ENCODE measurements at regions of chr14 and their contacts with region 1.

Region 1: DNA sequence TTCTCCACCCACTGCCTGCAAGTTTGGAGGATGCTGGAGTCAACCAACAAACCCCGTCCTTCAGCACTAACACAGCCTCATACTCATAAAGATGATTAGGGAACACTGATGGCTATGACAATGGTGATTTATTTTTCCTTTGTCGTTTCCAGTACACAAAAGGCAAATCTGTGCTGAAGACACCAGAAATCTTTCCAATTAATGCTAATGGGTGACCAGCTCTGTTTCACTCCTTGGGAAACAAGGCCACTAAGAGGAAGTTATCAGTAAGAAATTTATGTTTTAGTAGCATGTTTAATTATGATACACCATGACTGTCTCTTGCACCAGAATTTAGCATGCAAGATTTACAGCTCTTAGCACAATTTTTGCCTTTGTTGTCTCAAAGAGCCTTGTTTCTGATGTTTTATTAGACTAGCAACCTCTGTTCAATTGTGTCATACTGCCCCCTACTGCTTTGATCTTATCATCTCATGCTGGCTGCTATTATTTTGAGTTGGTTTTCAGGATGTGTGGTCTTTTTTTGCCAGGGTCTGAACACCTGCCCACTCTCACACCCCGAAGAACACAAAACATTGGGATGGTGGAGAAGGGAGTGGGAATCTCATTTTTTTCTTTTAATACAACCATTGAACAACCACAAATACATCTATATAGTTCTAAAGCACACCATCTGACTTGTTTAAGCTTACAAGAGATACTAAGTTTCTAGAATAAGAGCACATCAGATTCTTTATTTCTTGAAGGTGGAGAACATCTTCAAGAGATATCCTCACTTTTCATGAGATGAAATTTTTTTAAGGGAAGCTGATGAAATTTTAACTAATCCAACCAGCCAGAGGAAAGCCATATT is 160.9 kb downstream of the SPTSSA start:
- DNase-seq: peak in 1 of 10 donors; percentile 35
- H3K4me3 ChIP-seq: no peak overlapping the region
- H3K27ac ChIP-seq: peak overlapping the region in 27 of 59 donors; percentile 2 to 74 (median 48)
- H3K27me3 ChIP-seq: no peaks in the 10 kb centered on the region
- CTCF ChIP-seq: peak; percentile 56 to 87 (median 76)

Region 2: GRCh38 chr14:32576088-32576795 is 1724.9 kb before region 1 on chr14:
- intact Hi-C with region 1: loop called in 1 of 2 experiments (anchors 10 kb)
- DNase-seq: peak in 9 of 10 donors; percentile 31 to 72 (median 52)
- H3K4me3 ChIP-seq: peak overlapping the region in 36 of 59 donors; percentile 3 to 56 (median 32)
- H3K27ac ChIP-seq: peak overlapping the region in 48 of 59 donors; percentile 1 to 84 (median 60)
- H3K27me3 ChIP-seq: no peaks in the 10 kb centered on the region
- CTCF ChIP-seq: peak; percentile 91 to 99 (median 97)

Region 3: GRCh38 chr14:34237081-34237480 is 64.0 kb before region 1 on chr14:
- intact Hi-C with region 1: no loop called
- DNase-seq: no peak
- H3K4me3 ChIP-seq: no peak overlapping the region
- H3K27ac ChIP-seq: no peak overlapping the region
- H3K27me3 ChIP-seq: no peaks in the 10 kb centered on the region
- CTCF ChIP-seq: no peak

Measured in dorsolateral prefrontal cortex (tissue), 120 donors.